T-cell (primary cell): ENCODE measurements at regions of chr18 and their contacts with region 1.

Region 1: DNA sequence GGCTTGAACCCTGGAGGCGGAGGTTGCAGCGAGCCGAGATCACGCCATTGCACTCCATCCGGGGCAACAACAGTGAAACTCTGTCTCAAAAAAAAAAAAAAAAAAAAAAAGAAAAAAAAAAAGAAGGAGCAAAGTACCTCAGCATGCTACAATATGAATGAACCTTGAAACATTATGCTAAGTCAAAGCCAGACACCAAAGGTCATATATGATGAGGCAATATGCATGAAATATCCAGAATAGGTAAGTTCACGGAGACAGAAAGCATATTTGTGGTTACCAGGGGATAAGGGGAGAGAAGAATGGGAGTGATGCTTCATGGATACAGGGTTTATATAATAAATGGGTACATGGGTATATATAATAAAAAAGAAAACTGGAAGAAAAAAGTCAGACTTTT is 93.3 kb downstream of the PRELID3A start:
- DNase-seq: no peak
- ATAC-seq: no peak
- H3K4me3 ChIP-seq: no peak overlapping the region
- H3K4me3 Mint-ChIP-seq: no peak overlapping the region
- H3K27ac ChIP-seq: no peak overlapping the region
- H3K27ac Mint-ChIP-seq: no peak overlapping the region
- H3K4me1 ChIP-seq: no peaks in the 10 kb centered on the region
- H3K4me1 Mint-ChIP-seq: no peaks in the 10 kb centered on the region
- H3K27me3 ChIP-seq: no peaks in the 10 kb centered on the region
- H3K27me3 Mint-ChIP-seq: no peaks in the 10 kb centered on the region

Region 2: GRCh38 chr18:12517142-12517825 is 16.3 kb after region 1 on chr18:
- CTCF ChIA-PET with region 1: no interaction called
- POLR2A ChIA-PET with region 1: interaction called in 1 of 2 experiments, 10 read pairs
- DNase-seq: no peak
- ATAC-seq: no peak
- H3K4me3 ChIP-seq: no peak overlapping the region
- H3K4me3 Mint-ChIP-seq: no peak overlapping the region
- H3K27ac ChIP-seq: no peak overlapping the region
- H3K27ac Mint-ChIP-seq: no peak overlapping the region
- H3K4me1 ChIP-seq: no peaks in the 10 kb centered on the region
- H3K4me1 Mint-ChIP-seq: no peaks in the 10 kb centered on the region
- H3K27me3 ChIP-seq: peaks cover 0 to 10% of the 10 kb centered on the region in 2 experiments
- H3K27me3 Mint-ChIP-seq: no peaks in the 10 kb centered on the region

Region 3: GRCh38 chr18:13086906-13087305 is 585.9 kb after region 1 on chr18:
- CTCF ChIA-PET with region 1: no interaction called
- POLR2A ChIA-PET with region 1: no interaction called
- DNase-seq: no peak
- ATAC-seq: no peak
- H3K4me3 ChIP-seq: no peak overlapping the region
- H3K4me3 Mint-ChIP-seq: no peak overlapping the region
- H3K27ac ChIP-seq: no peak overlapping the region
- H3K27ac Mint-ChIP-seq: no peak overlapping the region
- H3K4me1 ChIP-seq: no peaks in the 10 kb centered on the region
- H3K4me1 Mint-ChIP-seq: peaks cover 3 to 15% (median 6%) of the 10 kb centered on the region in 3 donors
- H3K27me3 ChIP-seq: no peaks in the 10 kb centered on the region
- H3K27me3 Mint-ChIP-seq: no peaks in the 10 kb centered on the region